Colonic mucosa (tissue), 4 donors: ENCODE measurements at regions of chr21 and their contacts with region 1.

Region 1: DNA sequence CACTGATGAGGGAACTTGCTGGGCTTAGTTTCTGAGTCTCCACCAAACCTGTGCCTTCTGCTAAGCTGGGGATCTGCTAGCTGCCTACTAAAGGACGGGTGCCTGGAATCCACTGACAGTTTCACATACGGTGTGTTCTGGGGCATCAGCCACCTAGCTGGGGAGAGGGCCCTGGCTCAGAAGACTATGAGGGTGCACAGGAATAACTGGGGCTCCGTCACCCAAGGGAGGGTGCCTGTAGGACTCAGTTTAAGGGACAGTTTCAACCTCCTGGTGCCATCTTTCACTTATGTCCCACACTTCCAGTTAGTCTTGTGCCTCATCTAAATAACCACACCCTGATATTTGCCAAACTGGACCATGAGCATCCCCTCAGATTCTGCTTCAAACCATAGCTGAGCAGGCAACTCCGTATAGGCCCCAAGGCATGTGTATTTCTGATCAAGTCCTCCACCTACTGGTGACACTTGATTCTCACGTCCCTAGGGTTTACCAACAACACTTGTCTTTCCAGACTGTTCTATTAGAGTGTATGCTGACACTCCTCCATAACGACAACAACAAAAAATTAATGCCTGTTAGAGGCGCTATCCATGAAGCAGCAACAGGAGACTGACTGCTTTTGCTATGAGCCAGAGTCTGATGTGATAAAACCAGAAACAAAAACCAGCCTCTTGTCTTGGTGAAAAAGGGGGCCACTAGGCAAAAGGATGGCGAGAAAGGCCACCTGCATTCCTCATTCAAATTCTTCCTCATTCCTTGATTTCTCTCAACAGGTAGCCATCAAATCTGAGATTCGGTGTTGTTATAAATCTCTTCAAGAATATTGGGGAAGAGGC is 55.0 kb upstream of the PAXBP1 start:
- DNase-seq: peak; percentile 66
- H3K4me3 ChIP-seq: no peak overlapping the region
- H3K27ac ChIP-seq: no peak overlapping the region
- H3K4me1 ChIP-seq: no peaks in the 10 kb centered on the region
- H3K27me3 ChIP-seq: no peaks in the 10 kb centered on the region
- CTCF ChIP-seq: peak; percentile 62

Region 2: GRCh38 chr21:32653311-32653901 is 173.1 kb before region 1 on chr21:
- intact Hi-C with region 1: loop called (anchors 5 kb)
- DNase-seq: no peak
- H3K4me3 ChIP-seq: no peak overlapping the region
- H3K27ac ChIP-seq: no peak overlapping the region
- H3K4me1 ChIP-seq: no peaks in the 10 kb centered on the region
- H3K27me3 ChIP-seq: no peaks in the 10 kb centered on the region
- CTCF ChIP-seq: peak; percentile 51

Region 3: DNA sequence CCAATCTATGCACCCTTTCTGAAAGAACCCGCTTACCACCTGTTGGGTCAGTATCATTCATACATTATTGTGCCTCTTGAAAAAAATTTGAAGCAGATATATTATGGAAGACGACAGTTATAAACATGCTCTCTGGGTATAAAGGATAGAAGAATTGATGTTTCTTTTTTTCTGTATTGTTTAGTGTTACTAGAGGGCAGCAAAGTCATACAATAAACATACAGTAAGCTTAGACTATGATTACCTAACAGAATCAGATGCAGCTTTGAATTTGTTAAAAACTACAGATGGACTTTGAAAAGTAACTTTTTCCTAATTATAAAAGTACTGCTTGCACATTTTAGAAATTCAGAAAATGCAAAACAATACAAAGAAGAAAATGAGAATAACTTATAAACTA is 43.9 kb before region 1 on chr21:
- intact Hi-C with region 1: loop called (anchors 2 kb)
- DNase-seq: no peak
- H3K4me3 ChIP-seq: no peak overlapping the region
- H3K27ac ChIP-seq: no peak overlapping the region
- H3K4me1 ChIP-seq: no peaks in the 10 kb centered on the region
- H3K27me3 ChIP-seq: no peaks in the 10 kb centered on the region
- CTCF ChIP-seq: no peak